Tibial artery (tissue), 4 donors: ENCODE measurements at regions of chr3 and their contacts with region 1.

Region 1: GRCh38 chr3:192802957-192803899 is 75.9 kb upstream of the FGF12 start:
- DNase-seq: no peak
- H3K4me3 ChIP-seq: no peak overlapping the region
- H3K27ac ChIP-seq: no peak overlapping the region
- H3K4me1 ChIP-seq: no peaks in the 10 kb centered on the region
- H3K27me3 ChIP-seq: no peaks in the 10 kb centered on the region
- CTCF ChIP-seq: peak; percentile 36 to 43

Region 2: DNA sequence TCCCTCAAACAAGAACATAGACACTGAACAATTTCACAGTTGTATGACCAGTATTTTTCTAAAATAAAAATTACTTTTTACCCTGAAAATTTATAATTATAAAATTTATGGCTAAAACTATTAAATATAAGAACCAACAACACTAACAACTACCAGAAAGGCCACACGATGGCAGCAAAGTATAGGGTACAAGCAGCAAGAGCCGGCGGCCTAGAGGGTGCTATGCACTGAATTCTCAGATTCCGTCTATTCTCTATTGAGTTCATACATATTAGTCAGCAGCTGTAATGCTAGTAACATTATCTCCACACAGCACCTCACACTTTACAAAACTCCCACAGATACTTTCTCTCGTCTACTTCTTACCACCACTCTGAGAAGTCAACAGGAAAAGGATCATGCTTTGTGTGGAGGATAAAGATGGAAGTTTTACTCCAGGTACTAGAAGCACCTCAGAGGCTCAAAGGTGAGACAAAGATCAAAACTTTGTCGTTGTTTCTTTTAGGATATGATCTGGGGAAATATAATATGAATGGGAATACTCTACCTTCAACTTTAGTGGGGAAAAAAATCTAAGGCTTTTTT is 236.4 kb before region 1 on chr3:
- intact Hi-C with region 1: loop called (anchors 5 kb)
- DNase-seq: peak; percentile 71 to 81
- H3K4me3 ChIP-seq: no peak overlapping the region
- H3K27ac ChIP-seq: no peak overlapping the region
- H3K4me1 ChIP-seq: peaks cover 0 to 8% (median 0%) of the 10 kb centered on the region in 4 donors
- H3K27me3 ChIP-seq: no peaks in the 10 kb centered on the region
- CTCF ChIP-seq: peak; percentile 59 to 80

Region 3: DNA sequence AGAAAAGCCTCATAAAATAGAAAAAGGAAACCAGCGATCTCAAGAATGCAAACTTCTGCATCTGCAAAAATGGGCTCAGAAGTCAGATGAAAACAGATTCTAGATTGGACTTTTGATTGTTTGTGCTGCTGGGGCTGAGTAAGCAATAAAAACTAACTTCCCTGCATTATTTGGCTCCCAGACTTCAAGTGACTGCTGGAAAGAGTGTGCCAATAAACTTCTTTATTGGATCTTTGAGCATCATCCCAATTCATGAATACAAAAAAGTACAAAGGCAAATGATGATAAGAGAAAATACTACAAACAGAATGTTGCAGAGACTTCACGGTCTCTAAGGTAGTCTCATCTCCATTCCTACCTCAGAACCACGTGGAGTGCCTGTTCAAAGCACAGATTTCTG is 173.8 kb before region 1 on chr3:
- intact Hi-C with region 1: no loop called
- DNase-seq: no peak
- H3K4me3 ChIP-seq: no peak overlapping the region
- H3K27ac ChIP-seq: no peak overlapping the region
- H3K4me1 ChIP-seq: no peaks in the 10 kb centered on the region
- H3K27me3 ChIP-seq: no peaks in the 10 kb centered on the region
- CTCF ChIP-seq: no peak

Region 4: GRCh38 chr3:192825657-192826200 is 22.5 kb after region 1 on chr3:
- intact Hi-C with region 1: no loop called
- DNase-seq: no peak
- H3K4me3 ChIP-seq: no peak overlapping the region
- H3K27ac ChIP-seq: no peak overlapping the region
- H3K4me1 ChIP-seq: peaks cover 0 to 6% (median 3%) of the 10 kb centered on the region in 4 donors
- H3K27me3 ChIP-seq: no peaks in the 10 kb centered on the region
- CTCF ChIP-seq: no peak

Region 5: GRCh38 chr3:192980632-192981031 is 177.4 kb after region 1 on chr3:
- intact Hi-C with region 1: no loop called
- DNase-seq: no peak
- H3K4me3 ChIP-seq: no peak overlapping the region
- H3K27ac ChIP-seq: no peak overlapping the region
- H3K4me1 ChIP-seq: no peaks in the 10 kb centered on the region
- H3K27me3 ChIP-seq: no peaks in the 10 kb centered on the region
- CTCF ChIP-seq: no peak